Psoas muscle (tissue), 8 donors: ENCODE measurements at regions of chr5 and their contacts with region 1.

Region 1: DNA sequence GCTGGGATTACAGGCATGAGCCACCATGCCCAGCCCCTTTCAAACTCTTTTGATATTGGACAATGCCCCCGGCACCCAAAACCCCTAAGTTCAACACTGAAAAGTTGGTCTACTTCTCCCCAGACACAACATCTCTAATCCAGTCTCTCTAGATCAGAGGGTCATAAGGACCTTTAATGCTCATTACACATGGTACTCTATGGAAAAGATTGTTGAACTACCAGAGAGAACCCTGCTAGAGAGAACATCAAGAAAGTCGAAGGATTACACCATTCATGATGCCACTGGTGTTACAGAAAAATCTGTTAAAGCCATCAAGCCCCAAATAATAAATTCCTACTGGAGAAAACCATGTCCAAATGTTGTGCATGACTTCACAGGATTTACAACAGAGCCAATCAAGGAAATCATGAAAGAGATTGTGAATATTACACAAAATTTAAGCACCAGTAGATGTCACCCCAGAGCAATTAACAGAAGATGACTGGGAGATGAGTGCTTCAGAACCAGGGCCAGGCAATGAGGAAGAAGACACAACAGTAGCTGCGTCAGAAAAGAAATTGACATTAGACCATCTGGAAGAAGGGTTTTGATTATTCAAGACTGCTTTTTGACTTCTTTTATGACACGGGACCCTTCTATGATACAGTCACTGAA is 28.3 kb upstream of the NIPAL4 start:
- DNase-seq: no peak
- ATAC-seq: peak; percentile 61 to 90 (median 78)
- H3K4me3 ChIP-seq: no peak overlapping the region
- H3K27ac ChIP-seq: no peak overlapping the region
- H3K4me1 ChIP-seq: no peaks in the 10 kb centered on the region
- H3K27me3 ChIP-seq: no peaks in the 10 kb centered on the region
- CTCF ChIP-seq: peak; percentile 62

Region 2: GRCh38 chr5:157076558-157076957 is 355.1 kb before region 1 on chr5:
- intact Hi-C with region 1: no loop called
- DNase-seq: no peak
- ATAC-seq: no peak
- H3K4me3 ChIP-seq: no peak overlapping the region
- H3K27ac ChIP-seq: no peak overlapping the region
- H3K4me1 ChIP-seq: no peaks in the 10 kb centered on the region
- H3K27me3 ChIP-seq: no peaks in the 10 kb centered on the region
- CTCF ChIP-seq: no peak

Region 3: DNA sequence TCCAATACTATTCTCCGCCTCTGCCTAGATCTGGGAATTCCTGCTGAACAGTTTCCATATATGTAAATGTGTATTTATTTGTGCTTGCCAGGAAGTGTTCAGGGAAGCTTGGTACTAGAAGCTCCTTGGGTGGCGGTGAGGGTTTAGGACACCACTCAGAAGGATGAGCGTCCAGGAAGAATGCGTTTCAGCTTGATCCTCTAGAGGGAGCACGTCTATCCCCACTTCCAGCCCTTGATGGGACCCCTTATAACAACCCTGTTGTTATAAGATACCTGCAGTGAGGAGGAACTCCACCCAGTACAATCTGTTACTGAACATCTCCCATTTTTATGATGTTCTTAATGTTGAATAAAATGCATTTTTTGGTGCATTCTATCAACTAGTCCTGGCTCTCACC is 76.9 kb before region 1 on chr5:
- intact Hi-C with region 1: no loop called
- DNase-seq: no peak
- ATAC-seq: no peak
- H3K4me3 ChIP-seq: no peak overlapping the region
- H3K27ac ChIP-seq: no peak overlapping the region
- H3K4me1 ChIP-seq: no peaks in the 10 kb centered on the region
- H3K27me3 ChIP-seq: no peaks in the 10 kb centered on the region
- CTCF ChIP-seq: no peak

Region 4: DNA sequence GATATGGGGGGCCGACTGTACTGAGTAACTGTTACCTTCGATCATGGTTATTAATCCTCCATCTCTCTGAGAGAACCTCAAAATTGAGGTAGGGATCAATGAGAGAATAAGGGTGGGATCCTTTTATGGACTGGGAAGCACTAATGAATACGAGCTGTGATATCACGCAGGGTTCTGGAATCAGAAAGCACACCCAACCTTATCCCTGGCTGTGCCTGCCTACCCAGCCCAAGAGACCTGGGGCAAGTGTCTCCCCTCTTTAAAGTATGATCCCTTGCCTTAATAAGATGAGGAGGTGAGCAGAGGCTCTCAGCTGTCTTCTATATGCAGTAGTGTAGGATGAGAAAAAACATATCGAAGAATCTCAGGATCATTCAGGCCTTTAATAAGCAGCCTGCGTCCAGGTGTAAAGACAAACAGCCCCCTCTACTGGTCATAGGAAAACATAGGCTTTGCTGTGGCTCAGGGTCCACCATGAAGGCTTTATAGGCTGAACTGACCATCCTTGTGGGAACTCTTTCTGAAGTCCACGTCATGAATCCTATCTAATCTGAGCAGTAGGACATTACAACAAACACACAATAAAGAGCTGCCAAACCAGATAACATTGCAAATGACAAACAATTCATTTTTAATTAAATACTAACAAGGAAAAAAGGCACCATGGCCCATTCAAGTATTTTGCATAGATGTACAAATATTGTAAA is 45.2 kb after region 1 on chr5:
- intact Hi-C with region 1: loop called in 1 of 2 experiments (anchors 2 kb)
- DNase-seq: no peak
- ATAC-seq: peak; percentile 72 to 88 (median 79)
- H3K4me3 ChIP-seq: no peak overlapping the region
- H3K27ac ChIP-seq: no peak overlapping the region
- H3K4me1 ChIP-seq: no peaks in the 10 kb centered on the region
- H3K27me3 ChIP-seq: no peaks in the 10 kb centered on the region
- CTCF ChIP-seq: peak; percentile 79

Region 5: DNA sequence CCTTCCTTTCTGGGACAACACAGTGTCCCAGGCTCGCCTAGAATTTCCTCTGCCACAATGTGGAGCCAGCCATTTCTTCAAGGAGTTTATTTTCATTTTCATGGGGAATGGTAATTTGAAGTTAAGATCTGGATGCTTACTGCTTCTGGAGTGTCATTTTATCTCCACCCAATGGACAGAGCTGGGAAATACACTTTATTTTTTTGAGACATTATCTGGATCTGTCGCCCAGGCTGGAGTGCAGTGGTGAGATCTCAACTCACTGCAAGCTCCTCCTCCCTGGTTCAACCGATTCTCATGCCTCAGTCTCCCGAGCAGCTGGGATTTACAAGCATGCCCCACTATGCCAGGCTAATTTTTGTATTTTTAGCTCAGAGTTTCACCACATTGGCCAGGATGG is 286.8 kb after region 1 on chr5:
- intact Hi-C with region 1: loop called (anchors 2 to 5 kb)
- DNase-seq: no peak
- ATAC-seq: peak; percentile 76 to 95 (median 81)
- H3K4me3 ChIP-seq: no peak overlapping the region
- H3K27ac ChIP-seq: no peak overlapping the region
- H3K4me1 ChIP-seq: peaks cover 3% of the 10 kb centered on the region
- H3K27me3 ChIP-seq: no peaks in the 10 kb centered on the region
- CTCF ChIP-seq: peak; percentile 66

Region 6: DNA sequence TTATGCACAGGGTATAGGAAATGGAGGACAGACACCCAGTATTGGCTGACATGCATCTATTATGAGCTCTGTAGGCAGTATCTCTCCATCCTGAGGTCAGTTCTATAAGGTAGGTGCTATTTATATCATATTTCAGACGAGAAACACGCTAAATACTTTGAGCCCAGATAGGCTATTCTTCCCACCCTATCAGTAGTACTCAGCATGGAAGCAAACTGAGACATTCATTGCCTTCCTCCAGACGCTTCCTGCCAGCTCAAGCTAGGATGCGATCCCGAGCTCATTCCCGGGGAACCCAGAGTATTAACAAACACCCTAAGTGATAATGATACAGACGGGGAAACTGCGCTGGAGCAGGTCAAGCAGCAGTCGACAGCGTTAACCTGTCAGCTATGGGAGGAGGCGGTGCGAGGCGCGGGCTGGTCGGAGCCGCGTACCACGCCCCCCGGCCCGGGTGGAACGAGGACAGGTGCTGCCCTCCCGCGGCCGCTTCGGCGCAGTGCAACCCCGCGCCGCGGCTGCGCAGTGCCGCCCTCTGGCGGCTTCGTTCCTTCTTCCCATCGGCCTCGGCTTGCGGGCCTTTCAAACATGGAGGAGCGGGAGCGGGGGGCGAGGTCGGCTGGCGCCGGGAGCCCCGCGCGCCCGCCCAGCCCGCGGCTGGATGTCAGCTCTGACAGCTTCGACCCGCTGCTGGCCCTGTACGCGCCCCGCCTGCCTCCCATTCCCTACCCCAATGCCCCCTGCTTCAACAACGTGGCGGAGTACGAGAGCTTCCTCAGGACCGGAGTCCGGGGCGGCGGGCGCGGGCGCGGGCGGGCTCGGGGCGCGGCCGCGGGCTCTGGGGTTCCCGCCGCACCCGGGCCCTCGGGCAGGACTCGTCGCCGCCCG is 311.7 kb after region 1 on chr5 and contains the start of gene LSM11:
- intact Hi-C with region 1: loop called in 1 of 2 experiments (anchors 10 kb)
- DNase-seq: peak; percentile 89 to 92
- ATAC-seq: peak; percentile 98 to 99 (median 99)
- H3K4me3 ChIP-seq: peak within 1 kb of the TSS; percentile 88
- H3K27ac ChIP-seq: no peak within 1 kb of the TSS
- H3K4me1 ChIP-seq: peaks cover 17% of the 10 kb centered on the region
- H3K27me3 ChIP-seq: no peaks in the 10 kb centered on the region
- CTCF ChIP-seq: peak; percentile 99
- total RNA-seq, gene LSM11: 1.0 to 1.9 (median 1.8) TPM